WTC11 (cell line): ENCODE measurements at regions of chr19 and their contacts with region 1.

Region 1: DNA sequence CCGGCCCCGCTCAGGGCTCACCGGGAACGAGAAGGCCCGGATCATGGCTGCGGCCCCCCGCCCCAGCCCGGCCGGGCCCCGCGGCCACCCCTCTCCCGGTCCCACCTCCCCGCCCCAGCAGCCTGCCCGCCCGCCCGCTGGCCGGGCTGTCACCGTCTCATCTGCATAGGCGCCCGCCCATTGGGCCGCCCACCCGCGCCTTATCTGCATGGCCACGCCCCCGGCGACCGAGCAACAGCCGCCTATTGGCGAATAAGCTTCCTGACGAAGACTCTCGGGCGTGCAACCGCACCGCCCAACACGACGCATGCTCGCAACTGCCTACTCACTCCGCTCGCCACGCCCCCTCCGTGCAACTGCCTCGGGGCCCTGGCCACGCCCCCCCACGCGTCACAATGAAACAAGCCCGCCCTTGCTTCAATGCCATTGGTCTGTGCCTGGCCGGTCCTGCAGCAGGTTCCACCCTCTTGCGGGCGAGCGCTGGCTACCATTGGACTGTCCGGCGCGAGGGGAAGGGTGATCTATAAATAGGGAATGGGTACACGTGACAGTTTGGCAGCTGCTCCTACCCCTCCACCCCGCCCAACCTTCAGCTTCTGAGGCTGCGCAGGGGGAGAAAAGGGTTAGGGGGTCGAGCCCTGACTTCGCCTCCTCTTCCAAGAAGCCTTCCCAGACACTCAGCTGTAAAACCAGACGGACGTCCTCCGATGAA is at the start of gene DACT3:
- DNase-seq: peak; percentile 100
- ATAC-seq: peak; percentile 91
- H3K4me3 Mint-ChIP-seq: peak within 1 kb of the TSS; percentile 76
- H3K27ac Mint-ChIP-seq: peak within 1 kb of the TSS; percentile 85
- H3K4me1 Mint-ChIP-seq: peaks cover 19% of the 10 kb centered on the region
- H3K27me3 Mint-ChIP-seq: peaks cover 51% of the 10 kb centered on the region
- CTCF ChIP-seq: no peak
- total RNA-seq, gene DACT3: 1.8 to 1.9 TPM (median 1.8 TPM) in 3 replicates

Region 2: GRCh38 chr19:46537136-46538097 is 123.8 kb before region 1 on chr19:
- CTCF ChIA-PET with region 1: interaction called, 11 read pairs
- POLR2A ChIA-PET with region 1: no interaction called
- DNase-seq: peak; percentile 83
- ATAC-seq: peak; percentile 89
- H3K4me3 Mint-ChIP-seq: no peak overlapping the region
- H3K27ac Mint-ChIP-seq: no peak overlapping the region
- H3K4me1 Mint-ChIP-seq: 0 out of 2 replicates have a peak, but pooled peaks cover 2% of the 10 kb centered on the region
- H3K27me3 Mint-ChIP-seq: peaks cover 5% of the 10 kb centered on the region
- CTCF ChIP-seq: peak; percentile 92

Region 3: GRCh38 chr19:46614114-46614722 is 47.0 kb before region 1 on chr19:
- CTCF ChIA-PET with region 1: interaction called, 484 read pairs
- POLR2A ChIA-PET with region 1: interaction called, 6 read pairs
- DNase-seq: peak; percentile 93
- ATAC-seq: peak; percentile 88
- H3K4me3 Mint-ChIP-seq: 0 out of 2 replicates have a peak overlapping the region, but pooled peaks have one; percentile 24
- H3K27ac Mint-ChIP-seq: no peak overlapping the region
- H3K4me1 Mint-ChIP-seq: peaks cover 9% of the 10 kb centered on the region
- H3K27me3 Mint-ChIP-seq: peaks cover 3% of the 10 kb centered on the region; the same call in 1 of the 2 replicates
- CTCF ChIP-seq: peak; percentile 88

Region 4: GRCh38 chr19:46648060-46648960 is 12.9 kb before region 1 on chr19:
- CTCF ChIA-PET with region 1: interaction called, 16 read pairs
- POLR2A ChIA-PET with region 1: no interaction called
- DNase-seq: no peak
- ATAC-seq: peak; percentile 37
- H3K4me3 Mint-ChIP-seq: peak overlapping the region; percentile 62
- H3K27ac Mint-ChIP-seq: no peak overlapping the region
- H3K4me1 Mint-ChIP-seq: peaks cover 6% of the 10 kb centered on the region
- H3K27me3 Mint-ChIP-seq: peaks cover 84% of the 10 kb centered on the region
- CTCF ChIP-seq: no peak

Region 5: GRCh38 chr19:46710687-46711086 is 49.5 kb after region 1 on chr19:
- CTCF ChIA-PET with region 1: interaction called, 32 read pairs
- POLR2A ChIA-PET with region 1: no interaction called
- DNase-seq: peak; percentile 83
- ATAC-seq: peak; percentile 81
- H3K4me3 Mint-ChIP-seq: no peak overlapping the region
- H3K27ac Mint-ChIP-seq: peak overlapping the region; percentile 95
- H3K4me1 Mint-ChIP-seq: peaks cover 16% of the 10 kb centered on the region
- H3K27me3 Mint-ChIP-seq: no peaks in the 10 kb centered on the region
- CTCF ChIP-seq: no peak

Region 6: DNA sequence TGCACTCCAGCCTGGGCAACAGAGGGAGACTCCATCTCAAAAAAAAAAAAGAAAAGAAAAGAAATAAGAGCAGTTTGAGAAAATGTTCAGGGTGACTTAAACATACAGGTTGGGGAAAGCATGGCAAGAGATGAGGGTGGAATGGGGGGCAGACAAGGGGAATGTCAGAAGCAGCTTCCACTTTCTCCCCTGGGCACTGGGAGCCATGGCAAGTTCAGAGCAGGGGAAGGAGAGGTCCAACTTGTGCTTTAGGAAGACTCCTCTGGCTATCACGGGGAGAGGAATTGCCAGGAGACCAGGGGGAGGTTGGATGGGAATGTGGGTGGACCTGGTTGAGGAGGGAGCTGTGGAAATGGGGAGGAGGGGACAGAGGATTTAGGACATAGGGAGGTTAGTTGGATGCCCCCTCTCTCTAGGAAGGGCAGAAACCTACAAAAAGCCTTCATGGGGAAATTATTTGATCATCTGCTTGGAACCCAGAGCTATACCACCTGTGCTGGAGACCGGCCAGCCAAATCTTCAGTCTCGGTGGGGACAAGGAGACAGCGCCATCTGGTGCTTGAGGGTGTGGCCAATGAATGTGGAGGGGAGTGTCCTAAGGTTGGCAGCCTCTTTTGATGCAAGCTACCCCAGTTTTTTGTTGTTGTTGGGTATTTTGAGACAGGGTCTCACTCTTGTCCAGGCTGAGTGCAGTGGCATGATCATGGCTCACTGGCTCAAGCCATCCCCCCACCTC is 92.4 kb after region 1 on chr19:
- CTCF ChIA-PET with region 1: interaction called, 10 read pairs
- POLR2A ChIA-PET with region 1: no interaction called
- DNase-seq: peak; percentile 77
- ATAC-seq: peak; percentile 80
- H3K4me3 Mint-ChIP-seq: no peak overlapping the region
- H3K27ac Mint-ChIP-seq: no peak overlapping the region
- H3K4me1 Mint-ChIP-seq: 0 out of 2 replicates have a peak, but pooled peaks cover 2% of the 10 kb centered on the region
- H3K27me3 Mint-ChIP-seq: no peaks in the 10 kb centered on the region
- CTCF ChIP-seq: 0 out of 2 replicates have a peak, but pooled peaks have one; percentile 50

Region 7: DNA sequence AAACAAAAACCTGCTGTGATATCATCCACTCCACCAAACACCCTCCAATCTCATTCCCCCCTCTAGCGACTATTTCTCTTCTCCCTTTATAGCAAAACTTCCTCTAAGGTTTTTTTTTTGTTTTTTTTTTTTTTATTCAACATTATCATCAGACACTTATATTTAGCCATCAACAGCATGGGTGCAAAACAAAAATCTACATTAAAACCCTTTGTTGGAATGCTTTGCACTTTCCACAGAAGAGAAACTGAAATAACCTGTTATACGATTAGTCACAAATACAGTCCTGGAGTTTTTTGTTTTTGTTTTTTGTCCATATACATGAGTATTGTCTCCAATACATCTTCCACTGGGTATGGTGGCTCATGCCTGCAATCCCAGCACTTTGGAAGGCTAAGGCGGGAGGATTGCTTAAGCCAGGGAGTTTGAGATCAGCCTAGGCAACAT is 164.4 kb after region 1 on chr19:
- CTCF ChIA-PET with region 1: no interaction called
- POLR2A ChIA-PET with region 1: no interaction called
- DNase-seq: no peak
- ATAC-seq: no peak
- H3K4me3 Mint-ChIP-seq: no peak overlapping the region
- H3K27ac Mint-ChIP-seq: no peak overlapping the region
- H3K4me1 Mint-ChIP-seq: peaks cover 14% of the 10 kb centered on the region
- H3K27me3 Mint-ChIP-seq: no peaks in the 10 kb centered on the region
- CTCF ChIP-seq: no peak